ENCODE measurements at regions of chr3 and their contacts with region 1.

Region 1: DNA sequence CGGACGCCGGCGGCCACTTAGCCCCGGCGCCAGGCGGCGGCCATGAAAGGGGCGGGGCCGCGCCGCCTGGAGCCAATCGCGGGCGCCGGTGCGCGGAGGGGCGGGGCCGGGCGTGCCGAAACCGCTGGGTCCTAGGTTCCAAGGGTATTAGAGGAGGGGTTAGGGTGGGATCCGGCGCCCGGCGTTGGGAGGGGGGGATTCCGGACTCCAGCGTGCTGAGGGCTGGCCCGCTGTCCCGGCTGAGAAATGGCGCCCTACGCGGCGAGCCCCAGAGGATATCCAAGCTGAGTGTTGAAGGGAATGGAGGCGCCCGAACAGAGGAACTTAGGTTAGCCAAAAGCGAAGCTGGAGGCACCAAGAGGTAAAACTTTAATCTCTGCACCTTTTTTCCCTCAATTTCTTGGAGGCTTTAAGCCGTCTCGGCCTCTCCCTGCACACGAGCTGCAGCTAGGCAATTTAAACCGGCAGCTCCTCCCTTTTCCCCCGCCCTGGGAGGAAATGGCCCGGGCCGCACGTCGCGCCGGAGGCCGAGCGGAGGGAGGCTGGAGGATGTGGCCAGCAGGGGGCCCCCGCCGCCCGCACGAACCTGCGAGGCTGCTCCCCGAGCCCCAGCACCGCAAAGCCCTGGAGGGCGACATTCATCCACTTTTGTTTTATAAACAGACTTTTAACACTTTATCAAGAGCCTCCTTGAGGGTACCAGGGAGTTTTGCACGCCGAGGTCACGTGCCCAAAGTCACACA is at the start of gene XXYLT1:
- DNase-seq: peak; percentile 65 to 86
- ATAC-seq: peak; percentile 87 to 91
- H3K4me3 ChIP-seq: peak within 1 kb of the TSS; percentile 69
- H3K27ac ChIP-seq: peak within 1 kb of the TSS; percentile 87 to 99
- H3K4me1 ChIP-seq: peaks cover 12% of the 10 kb centered on the region
- CTCF ChIP-seq: peak; percentile 93
- EP300 ChIP-seq: no peak
- POLR2A ChIP-seq: no peak; the same call in 1 of the 2 replicates
- RAD21 ChIP-seq: peak; percentile 83 to 97
- polyA plus RNA-seq, gene XXYLT1: 11.5 and 12.0 TPM in 2 replicates

Region 2: GRCh38 chr3:194671900-194672808 is 599.1 kb before region 1 on chr3 and contains the start of gene LSG1:
- CTCF ChIA-PET with region 1: interaction called, 8 read pairs
- POLR2A ChIA-PET with region 1: interaction called, 13 read pairs
- DNase-seq: peak; percentile 69 to 94
- ATAC-seq: peak; percentile 94 to 97
- H3K4me3 ChIP-seq: peak within 1 kb of the TSS; percentile 92
- H3K27ac ChIP-seq: peak within 1 kb of the TSS; percentile 86 to 90
- H3K4me1 ChIP-seq: peaks cover 13% of the 10 kb centered on the region; the same call in 2 of the 3 replicates
- CTCF ChIP-seq: no peak
- EP300 ChIP-seq: no peak
- POLR2A ChIP-seq: peak; percentile 62
- RAD21 ChIP-seq: no peak
- polyA plus RNA-seq, gene LSG1: 70.3 and 77.1 TPM in 2 replicates

Region 3: GRCh38 chr3:195259475-195260279 is 11.6 kb before region 1 on chr3:
- CTCF ChIA-PET with region 1: interaction called, 41 read pairs
- POLR2A ChIA-PET with region 1: interaction called, 5 read pairs
- DNase-seq: peak; percentile 54 to 72
- ATAC-seq: peak; percentile 75 to 77
- H3K4me3 ChIP-seq: peak overlapping the region; percentile 65
- H3K27ac ChIP-seq: peak overlapping the region; percentile 89 to 94
- H3K4me1 ChIP-seq: peaks cover 7% of the 10 kb centered on the region; the same call in 1 of the 3 replicates
- CTCF ChIP-seq: peak; percentile 91
- EP300 ChIP-seq: no peak
- POLR2A ChIP-seq: no peak
- RAD21 ChIP-seq: peak; percentile 25 to 90; a peak in 4 of 5 replicates

Region 4: DNA sequence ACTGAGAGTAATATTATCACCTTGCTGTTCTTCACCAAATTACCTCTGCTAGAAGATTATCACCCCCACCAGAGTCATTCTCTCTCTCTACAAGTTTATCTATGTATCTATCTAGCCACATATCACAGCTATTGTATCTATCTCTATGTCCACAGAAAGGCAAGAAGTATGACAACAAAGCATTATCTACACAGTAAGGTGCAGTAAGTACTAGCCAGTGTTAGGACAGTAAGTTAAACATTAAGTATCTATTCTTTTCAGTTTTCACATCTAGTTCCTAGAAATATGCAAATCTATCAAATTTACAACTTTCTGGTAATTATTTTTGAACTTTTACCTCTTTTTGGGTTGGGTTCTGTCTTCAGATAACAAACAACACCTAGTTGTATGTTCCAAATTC is 26.2 kb after region 1 on chr3:
- CTCF ChIA-PET with region 1: interaction called, 12 read pairs
- POLR2A ChIA-PET with region 1: no interaction called
- DNase-seq: no peak
- ATAC-seq: no peak
- H3K4me3 ChIP-seq: no peak overlapping the region
- H3K27ac ChIP-seq: no peak overlapping the region
- H3K4me1 ChIP-seq: no peaks in the 10 kb centered on the region
- CTCF ChIP-seq: no peak
- EP300 ChIP-seq: no peak
- POLR2A ChIP-seq: no peak
- RAD21 ChIP-seq: no peak

Region 5: GRCh38 chr3:195508185-195508584 is 236.9 kb after region 1 on chr3:
- CTCF ChIA-PET with region 1: interaction called, 23 read pairs
- POLR2A ChIA-PET with region 1: no interaction called
- DNase-seq: no peak
- ATAC-seq: no peak
- H3K4me3 ChIP-seq: no peak overlapping the region
- H3K27ac ChIP-seq: no peak overlapping the region
- H3K4me1 ChIP-seq: no peaks in the 10 kb centered on the region
- CTCF ChIP-seq: no peak
- EP300 ChIP-seq: no peak
- POLR2A ChIP-seq: no peak
- RAD21 ChIP-seq: no peak

Region 6: GRCh38 chr3:195542698-195543499 is 271.6 kb after region 1 on chr3 and contains the start of gene PPP1R2:
- CTCF ChIA-PET with region 1: interaction called, 11 read pairs
- POLR2A ChIA-PET with region 1: interaction called, 18 read pairs
- DNase-seq: peak; percentile 54 to 88
- ATAC-seq: peak; percentile 88 to 95
- H3K4me3 ChIP-seq: peak within 1 kb of the TSS; percentile 93
- H3K27ac ChIP-seq: peak within 1 kb of the TSS; percentile 86 to 91
- H3K4me1 ChIP-seq: peaks cover 29% of the 10 kb centered on the region; the same call in 2 of the 3 replicates
- CTCF ChIP-seq: no peak
- EP300 ChIP-seq: no peak
- POLR2A ChIP-seq: peak; percentile 93
- RAD21 ChIP-seq: no peak
- polyA plus RNA-seq, gene PPP1R2: 44.0 and 47.3 TPM in 2 replicates

Measured in A549 (cell line).